Activated CD4-positive, alpha-beta memory T cell treated with anti-CD3 and anti-CD28 coated beads, Interleukin-2, amount 10 ng/mL, durations not matched to agents 7 days and 5 days (primary cell): ENCODE measurements at regions of chr7 and their contacts with region 1.

Region 1: GRCh38 chr7:22110227-22110839 is 164.6 kb upstream of the CDCA7L start:
- DNase-seq: peak; percentile 75
- H3K4me3 Mint-ChIP-seq: no peak overlapping the region
- H3K27ac Mint-ChIP-seq: no peak overlapping the region
- H3K4me1 Mint-ChIP-seq: peaks cover 3% of the 10 kb centered on the region
- H3K27me3 Mint-ChIP-seq: no peaks in the 10 kb centered on the region

Region 2: DNA sequence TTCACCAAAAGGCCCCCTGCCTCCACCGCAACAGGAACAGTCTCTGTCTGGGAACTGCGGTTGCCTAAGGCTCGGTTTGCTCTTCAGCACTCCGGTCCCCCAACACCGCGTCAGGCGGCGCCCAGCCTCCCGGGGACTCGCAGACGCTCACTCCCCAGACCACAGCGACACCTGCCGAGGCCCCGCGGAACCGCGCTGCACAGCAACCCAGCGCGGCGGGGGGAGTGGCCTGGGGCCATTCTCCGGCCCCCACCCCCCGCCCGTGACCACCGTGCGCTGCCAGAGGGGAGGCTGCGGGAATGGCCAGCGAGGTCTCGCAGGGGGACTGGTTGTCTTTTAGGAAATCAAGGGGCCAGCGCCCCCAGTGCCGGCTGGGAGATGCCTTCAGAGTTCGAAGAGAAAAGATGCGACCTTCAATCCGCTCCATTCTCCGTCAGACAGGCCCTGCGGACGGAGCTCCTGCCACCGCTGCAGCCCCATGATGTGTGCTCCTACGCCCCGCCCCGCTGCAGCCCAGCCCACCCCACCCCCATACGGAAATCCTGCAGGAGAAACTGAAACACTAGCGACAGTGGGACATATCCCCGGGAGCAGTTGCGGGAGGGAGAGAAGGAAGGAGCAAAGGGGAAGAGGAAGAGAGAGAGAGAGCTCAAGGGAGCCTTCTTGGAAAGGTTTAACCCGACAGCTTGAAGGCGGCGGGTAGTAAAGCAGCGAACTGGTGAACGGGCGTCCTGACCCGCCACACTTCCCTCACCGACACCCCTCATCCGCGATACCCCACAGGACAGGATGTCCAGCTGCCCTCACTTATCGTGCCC is 27.2 kb before region 1 on chr7:
- CTCF ChIA-PET with region 1: interaction called, 17 read pairs
- POLR2A ChIA-PET with region 1: no interaction called
- DNase-seq: peak; percentile 82
- H3K4me3 Mint-ChIP-seq: peak overlapping the region; percentile 71
- H3K27ac Mint-ChIP-seq: no peak overlapping the region
- H3K4me1 Mint-ChIP-seq: peaks cover 17% of the 10 kb centered on the region
- H3K27me3 Mint-ChIP-seq: peaks cover 45% of the 10 kb centered on the region

Region 3: DNA sequence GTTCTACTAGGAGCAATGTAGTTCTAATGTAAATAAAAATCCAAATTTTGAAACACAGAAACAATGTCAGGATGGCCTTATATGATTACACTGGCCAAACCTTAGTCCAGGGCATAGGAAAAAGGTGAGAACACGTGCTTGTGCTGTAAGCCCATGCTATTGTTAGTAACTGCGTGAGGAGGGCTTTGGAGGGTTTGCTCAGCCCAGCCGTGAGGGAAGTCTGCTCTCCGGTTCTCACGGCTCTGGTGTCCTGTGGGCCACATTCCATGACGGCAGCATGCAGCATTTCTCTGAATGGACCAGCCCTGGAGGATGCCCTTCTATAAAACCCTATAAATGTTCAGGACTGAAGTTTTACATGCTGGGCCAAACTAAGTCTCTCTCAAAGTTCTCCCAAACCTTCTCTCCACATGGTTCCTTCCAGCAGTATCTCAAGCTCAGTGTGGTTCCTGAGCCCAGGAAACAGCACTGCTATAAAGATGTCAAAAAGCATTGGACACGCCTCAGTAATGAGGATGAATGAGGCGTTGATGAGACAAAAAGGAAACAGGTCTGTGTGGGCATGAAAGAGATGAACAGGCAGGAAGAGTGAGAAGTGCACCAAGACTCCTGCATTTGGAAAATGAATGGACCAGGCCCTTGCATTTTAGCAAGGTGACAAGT is 10.2 kb after region 1 on chr7:
- CTCF ChIA-PET with region 1: interaction called, 16 read pairs
- POLR2A ChIA-PET with region 1: no interaction called
- DNase-seq: no peak
- H3K4me3 Mint-ChIP-seq: no peak overlapping the region
- H3K27ac Mint-ChIP-seq: no peak overlapping the region
- H3K4me1 Mint-ChIP-seq: peaks cover 35% of the 10 kb centered on the region
- H3K27me3 Mint-ChIP-seq: peaks cover 17% of the 10 kb centered on the region

Region 4: DNA sequence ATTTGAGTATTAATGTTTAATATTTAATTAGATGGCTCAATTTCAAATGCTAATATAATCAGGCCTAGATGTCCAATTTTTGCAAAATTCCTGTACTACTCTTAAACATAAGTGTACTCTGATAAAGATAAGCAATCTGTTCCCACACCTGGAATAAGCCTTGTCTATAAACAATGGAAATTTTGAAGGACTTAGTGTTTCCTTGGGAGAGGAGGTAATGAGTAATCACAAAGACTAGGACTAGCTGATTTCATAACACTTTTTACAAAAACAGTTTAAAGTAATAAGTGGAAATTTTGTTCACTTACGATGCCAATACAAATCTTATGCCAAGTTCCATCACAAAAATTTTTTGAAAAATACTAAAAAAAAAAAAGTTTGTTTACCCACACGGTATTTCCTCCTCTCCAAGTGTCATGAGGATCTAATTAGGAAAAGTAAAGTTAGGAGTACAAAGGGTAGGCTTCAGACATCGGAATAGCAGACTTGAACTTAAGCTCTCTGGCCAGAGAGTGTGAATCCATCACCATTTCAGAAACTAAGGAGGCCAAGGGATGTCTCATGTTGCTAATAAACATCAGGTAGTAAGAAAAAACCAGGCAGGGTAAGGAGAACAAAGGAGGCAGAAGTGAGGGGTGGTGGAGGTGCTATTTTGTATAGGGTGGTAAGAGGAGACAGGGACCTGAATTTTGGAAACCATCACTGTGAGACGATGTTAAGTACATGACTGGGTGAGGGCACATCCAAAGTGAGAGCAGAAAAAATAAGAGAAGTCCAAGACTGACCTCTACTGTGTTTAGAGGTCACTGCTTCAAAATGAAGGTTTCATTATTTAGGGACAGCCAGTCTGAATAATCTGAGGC is 185.3 kb after region 1 on chr7:
- CTCF ChIA-PET with region 1: interaction called, 13 read pairs
- POLR2A ChIA-PET with region 1: interaction called, 3 read pairs
- DNase-seq: no peak
- H3K4me3 Mint-ChIP-seq: no peak overlapping the region
- H3K27ac Mint-ChIP-seq: no peak overlapping the region
- H3K4me1 Mint-ChIP-seq: peaks cover 23% of the 10 kb centered on the region
- H3K27me3 Mint-ChIP-seq: peaks cover 47% of the 10 kb centered on the region

Region 5: GRCh38 chr7:22488643-22489462 is 378.5 kb after region 1 on chr7:
- CTCF ChIA-PET with region 1: interaction called, 27 read pairs
- POLR2A ChIA-PET with region 1: no interaction called
- DNase-seq: peak; percentile 68
- H3K4me3 Mint-ChIP-seq: no peak overlapping the region
- H3K27ac Mint-ChIP-seq: no peak overlapping the region
- H3K4me1 Mint-ChIP-seq: peaks cover 20% of the 10 kb centered on the region
- H3K27me3 Mint-ChIP-seq: peaks cover 25% of the 10 kb centered on the region

Region 6: GRCh38 chr7:22499044-22499443 is 388.7 kb after region 1 on chr7:
- CTCF ChIA-PET with region 1: interaction called, 13 read pairs
- POLR2A ChIA-PET with region 1: no interaction called
- DNase-seq: no peak
- H3K4me3 Mint-ChIP-seq: no peak overlapping the region
- H3K27ac Mint-ChIP-seq: no peak overlapping the region
- H3K4me1 Mint-ChIP-seq: peaks cover 6% of the 10 kb centered on the region
- H3K27me3 Mint-ChIP-seq: peaks cover 29% of the 10 kb centered on the region